Activated T-helper 2 cell treated with anti-CD3 and anti-CD28 coated beads, Interferon-gamma antibody, Interleukin-2, Interleukin-4, amounts not matched to agents 10 μg/mL and 5 μg/mL and 100 μg/mL, durations not matched to agents 14 hours and 24 hours and 36 hours (primary cell): ENCODE measurements at regions of chr14 and their contacts with region 1.

Region 1: DNA sequence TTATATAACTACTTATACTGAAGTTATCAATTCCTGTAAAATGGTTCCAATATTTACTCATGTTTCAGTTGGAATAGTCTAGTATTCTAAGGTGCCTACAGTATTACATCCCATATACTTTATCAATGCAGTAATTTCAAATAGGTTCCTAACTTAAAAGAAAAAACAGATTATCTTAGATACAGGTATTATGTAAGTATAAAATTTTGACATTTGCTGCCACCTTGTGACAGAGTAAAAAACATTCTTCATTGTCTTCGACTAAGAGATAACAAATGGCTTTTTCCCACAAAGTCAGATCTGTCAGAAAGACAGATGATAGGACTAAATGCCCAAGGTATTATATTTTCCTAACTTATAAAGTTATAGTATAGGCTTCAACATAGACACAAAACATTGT is 78.7 kb downstream of the TXNDC16 start:
- DNase-seq: no peak
- H3K4me3 Mint-ChIP-seq: no peak overlapping the region
- H3K27ac Mint-ChIP-seq: no peak overlapping the region
- H3K4me1 Mint-ChIP-seq: peaks cover 26% of the 10 kb centered on the region
- H3K27me3 Mint-ChIP-seq: no peaks in the 10 kb centered on the region

Region 2: GRCh38 chr14:52299692-52300278 is 173.8 kb before region 1 on chr14:
- intact Hi-C with region 1: loop called (anchors 1 kb)
- DNase-seq: no peak
- H3K4me3 Mint-ChIP-seq: no peak overlapping the region
- H3K27ac Mint-ChIP-seq: no peak overlapping the region
- H3K4me1 Mint-ChIP-seq: peaks cover 35% of the 10 kb centered on the region
- H3K27me3 Mint-ChIP-seq: peaks cover 1% of the 10 kb centered on the region

Region 3: DNA sequence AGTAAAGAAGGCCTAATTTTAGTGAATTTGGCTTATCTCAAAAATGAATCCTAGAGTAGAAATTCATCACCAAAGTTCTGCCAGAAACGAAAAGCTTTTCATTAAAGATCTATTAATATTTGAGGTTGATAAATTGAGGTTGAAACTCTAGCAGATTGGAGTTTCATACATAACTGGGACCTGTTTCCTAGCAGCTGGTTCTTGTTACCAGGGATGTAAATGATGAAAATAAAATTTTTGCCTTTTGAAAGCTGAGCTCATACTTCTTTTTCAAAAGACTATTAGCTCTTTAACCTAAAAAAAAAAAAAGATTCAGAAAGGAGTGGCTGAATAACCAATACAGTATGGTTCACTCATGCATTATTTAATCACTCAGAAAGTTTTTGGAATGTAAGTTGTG is 61.1 kb before region 1 on chr14:
- intact Hi-C with region 1: no loop called
- DNase-seq: no peak
- H3K4me3 Mint-ChIP-seq: no peak overlapping the region
- H3K27ac Mint-ChIP-seq: peak overlapping the region; percentile 97
- H3K4me1 Mint-ChIP-seq: peaks cover 61% of the 10 kb centered on the region
- H3K27me3 Mint-ChIP-seq: no peaks in the 10 kb centered on the region